PC-9 (cell line): ENCODE measurements at regions of chr7 and their contacts with region 1.

Region 1: GRCh38 chr7:104397442-104397841 is 69.0 kb downstream of the LHFPL3 start:
- DNase-seq: no peak
- H3K4me3 ChIP-seq: no peak overlapping the region
- H3K27ac ChIP-seq: no peak overlapping the region
- H3K4me1 ChIP-seq: no peaks in the 10 kb centered on the region
- H3K27me3 ChIP-seq: peaks cover 10% of the 10 kb centered on the region
- CTCF ChIP-seq: no peak

Region 2: GRCh38 chr7:105060923-105061322 is 663.5 kb after region 1 on chr7:
- CTCF ChIA-PET with region 1: interaction called, 11 read pairs
- POLR2A ChIA-PET with region 1: no interaction called
- intact Hi-C with region 1: no loop called
- DNase-seq: no peak
- H3K4me3 ChIP-seq: no peak overlapping the region
- H3K27ac ChIP-seq: no peak overlapping the region
- H3K4me1 ChIP-seq: no peaks in the 10 kb centered on the region
- H3K27me3 ChIP-seq: no peaks in the 10 kb centered on the region
- CTCF ChIP-seq: no peak